HCT116 (cell line): ENCODE measurements at regions of chr3 and their contacts with region 1.

Region 1: GRCh38 chr3:128051837-128052594 is at the start of gene SEC61A1:
- DNase-seq: peak; percentile 78
- ATAC-seq: peak; percentile 98
- H3K4me3 ChIP-seq: peak within 1 kb of the TSS; percentile 80 to 86
- H3K27ac ChIP-seq: peak within 1 kb of the TSS; percentile 74
- H3K4me1 ChIP-seq: peaks cover 6 to 21% of the 10 kb centered on the region in 2 experiments
- H3K27me3 ChIP-seq: peaks cover 2% of the 10 kb centered on the region; the same call in 1 of the 2 replicates
- CTCF ChIP-seq: no peak
- POLR2A ChIP-seq: peak; percentile 74
- RAD21 ChIP-seq: no peak
- total RNA-seq, gene SEC61A1: 176 TPM

Region 2: DNA sequence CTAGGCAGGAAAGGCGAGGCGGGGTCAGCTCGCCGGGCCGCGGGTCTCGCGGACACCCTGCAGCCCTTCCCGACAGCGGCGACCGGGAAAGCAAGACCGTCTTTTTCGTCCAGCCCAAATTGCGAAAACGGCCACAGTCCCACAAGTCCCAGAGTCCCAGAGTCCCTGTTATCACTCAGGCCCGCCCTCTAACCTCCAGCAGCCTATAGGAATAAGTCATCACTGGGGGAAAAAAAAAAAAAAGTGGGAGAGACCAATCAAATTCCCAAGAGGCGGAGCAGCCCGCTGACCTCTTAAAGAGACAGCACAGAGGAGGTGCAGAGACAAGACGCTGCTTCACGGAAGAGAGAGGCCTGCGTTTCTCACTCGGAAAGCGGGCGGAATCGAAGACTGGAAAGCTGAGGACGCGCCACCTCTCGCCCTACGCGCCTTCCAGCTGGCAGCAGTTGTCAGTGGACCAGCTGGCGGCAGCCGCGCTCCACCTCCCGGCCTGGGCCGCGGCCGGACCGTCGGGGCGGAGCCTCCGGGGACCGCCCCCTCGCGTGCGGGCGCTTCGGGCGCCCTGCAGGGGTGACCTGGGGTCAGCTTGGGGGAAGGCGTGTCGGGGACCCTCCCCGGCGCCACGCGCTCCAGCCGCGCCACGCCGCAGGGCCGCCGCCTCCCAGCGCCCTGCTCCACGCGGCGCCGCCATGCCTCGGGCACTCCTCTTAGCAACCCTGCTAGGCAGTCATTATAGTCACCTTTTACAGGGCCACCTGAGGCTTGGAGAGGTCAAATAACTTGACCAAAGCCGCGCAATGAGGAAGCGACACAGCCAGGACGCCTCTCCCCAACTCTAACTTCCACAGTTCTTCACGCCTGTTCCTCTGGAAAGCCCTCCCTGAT is 461.2 kb before region 1 on chr3 and contains the start of gene TPRA1:
- CTCF ChIA-PET with region 1: no interaction called
- POLR2A ChIA-PET with region 1: no interaction called
- RAD21 ChIA-PET with region 1: no interaction called
- intact Hi-C with region 1: loop called (anchors 10 kb)
- DNase-seq: peak; percentile 94
- ATAC-seq: peak; percentile 79
- H3K4me3 ChIP-seq: peak within 1 kb of the TSS; percentile 78 to 95
- H3K27ac ChIP-seq: peak within 1 kb of the TSS; percentile 97
- H3K4me1 ChIP-seq: peaks cover 18 to 32% of the 10 kb centered on the region in 2 experiments
- H3K27me3 ChIP-seq: no peaks in the 10 kb centered on the region
- CTCF ChIP-seq: no peak
- POLR2A ChIP-seq: peak; percentile 80
- RAD21 ChIP-seq: no peak
- total RNA-seq, gene TPRA1: 35.1 TPM